ENCODE measurements at regions of chr18 and their contacts with region 1.

Region 1: DNA sequence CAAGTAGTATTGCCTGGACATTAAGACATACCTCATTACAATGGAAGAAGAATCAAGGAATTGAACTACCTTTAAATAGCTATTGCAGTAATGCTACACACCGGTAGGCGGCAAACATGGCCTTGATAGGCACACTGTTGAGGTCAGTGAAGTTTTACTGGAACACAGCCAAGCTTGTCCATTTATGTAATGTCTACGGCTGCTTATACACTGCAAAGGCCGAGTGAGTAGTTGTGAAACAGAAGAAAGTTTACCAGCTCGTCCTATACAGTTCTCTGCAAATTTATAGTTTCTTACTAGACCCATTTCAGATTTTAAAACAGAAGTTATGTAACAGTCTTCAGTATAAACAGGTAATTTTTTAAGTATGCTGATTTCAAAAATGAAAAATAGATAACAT is 38.8 kb downstream of the PPP4R1 start:
- DNase-seq: peak; percentile 42 to 92
- ATAC-seq: peak; percentile 95 to 99 (median 98)
- H3K4me3 ChIP-seq: no peak overlapping the region
- H3K27ac ChIP-seq: peak overlapping the region in 6 of 10 donors; percentile 6 to 60 (median 38)
- H3K4me1 ChIP-seq: peaks cover 0 to 13% (median 7%) of the 10 kb centered on the region in 9 donors
- H3K27me3 ChIP-seq: no peaks in the 10 kb centered on the region
- CTCF ChIP-seq: peak; percentile 81 to 94 (median 87)

Region 2: DNA sequence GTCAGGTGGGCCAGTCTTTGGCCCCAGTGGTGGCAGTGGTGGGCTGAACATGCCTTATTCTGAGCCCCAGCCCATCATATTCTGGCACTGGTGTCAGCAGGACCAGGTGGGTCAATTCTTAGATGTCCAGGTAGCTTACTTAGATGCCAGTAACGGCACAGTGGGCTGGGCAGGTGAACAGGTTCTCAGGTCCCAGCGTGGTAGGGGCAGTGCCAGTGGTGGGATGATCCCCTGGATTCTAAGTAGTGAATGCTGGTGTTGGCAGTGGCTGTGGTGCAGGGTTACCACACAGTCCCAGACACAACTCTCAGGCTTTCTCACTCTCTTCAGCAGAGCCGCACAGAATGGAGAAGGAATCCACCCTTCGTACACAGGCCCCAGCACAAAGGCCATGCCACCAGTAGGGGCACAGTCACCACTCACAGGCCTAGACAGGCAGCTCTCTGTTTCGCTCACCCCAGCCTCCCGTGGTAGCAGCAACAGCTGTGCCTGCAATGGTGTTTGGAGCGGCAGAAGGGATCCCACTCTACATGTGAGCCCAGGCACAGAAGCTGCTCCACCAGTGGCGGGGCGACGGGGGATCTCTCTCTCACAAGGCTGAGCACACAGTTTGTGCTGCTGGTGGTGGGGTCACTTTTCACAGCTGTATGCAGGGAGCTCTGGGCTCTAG is 341.7 kb before region 1 on chr18:
- intact Hi-C with region 1: no loop called
- DNase-seq: no peak
- ATAC-seq: peak in 1 of 8 donors; percentile 53
- H3K4me3 ChIP-seq: no peak overlapping the region
- H3K27ac ChIP-seq: no peak overlapping the region
- H3K4me1 ChIP-seq: peaks cover 0 to 9% (median 0%) of the 10 kb centered on the region in 9 donors
- H3K27me3 ChIP-seq: no peaks in the 10 kb centered on the region
- CTCF ChIP-seq: no peak

Region 3: GRCh38 chr18:9495911-9496705 is 79.5 kb before region 1 on chr18:
- intact Hi-C with region 1: no loop called
- DNase-seq: no peak
- ATAC-seq: no peak
- H3K4me3 ChIP-seq: no peak overlapping the region
- H3K27ac ChIP-seq: no peak overlapping the region
- H3K4me1 ChIP-seq: peaks cover 0 to 19% (median 3%) of the 10 kb centered on the region in 9 donors
- H3K27me3 ChIP-seq: no peaks in the 10 kb centered on the region
- CTCF ChIP-seq: no peak

Region 4: DNA sequence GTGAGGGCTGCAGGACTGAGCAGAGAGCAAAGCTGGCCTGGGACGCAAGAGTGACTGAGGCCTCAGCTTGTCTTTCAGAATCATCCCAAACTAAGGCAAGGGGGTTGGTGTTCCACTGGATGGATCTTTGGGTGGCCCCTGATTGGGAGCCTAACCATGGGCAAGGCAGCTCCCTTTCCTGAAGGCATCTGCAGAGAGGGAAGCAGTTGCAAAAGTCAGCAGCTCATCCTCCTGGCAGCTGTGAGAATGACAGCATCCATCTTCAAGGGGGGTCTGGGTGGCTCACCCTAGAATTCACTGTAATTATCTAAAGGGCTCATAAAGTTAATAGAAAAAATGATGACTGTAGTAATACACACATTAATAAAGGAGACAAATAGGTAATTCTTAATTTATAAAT is 86.0 kb after region 1 on chr18:
- intact Hi-C with region 1: loop called in 1 of 10 experiments (anchors 10 kb)
- DNase-seq: no peak
- ATAC-seq: no peak
- H3K4me3 ChIP-seq: no peak overlapping the region
- H3K27ac ChIP-seq: no peak overlapping the region
- H3K4me1 ChIP-seq: no peaks in the 10 kb centered on the region
- H3K27me3 ChIP-seq: no peaks in the 10 kb centered on the region
- CTCF ChIP-seq: peak in 2 of 9 donors; percentile 27 to 28

Region 5: GRCh38 chr18:9673296-9674251 is 98.0 kb after region 1 on chr18:
- intact Hi-C with region 1: loop called in 6 of 10 experiments (anchors 1 to 10 kb)
- DNase-seq: peak in 1 of 2 donors; percentile 36
- ATAC-seq: peak; percentile 87 to 95 (median 91)
- H3K4me3 ChIP-seq: no peak overlapping the region
- H3K27ac ChIP-seq: peak overlapping the region in 3 of 10 donors; percentile 6 to 49 (median 31)
- H3K4me1 ChIP-seq: peaks cover 0 to 17% (median 0%) of the 10 kb centered on the region in 9 donors
- H3K27me3 ChIP-seq: no peaks in the 10 kb centered on the region
- CTCF ChIP-seq: peak in 6 of 9 donors; percentile 19 to 55 (median 48)

Region 6: GRCh38 chr18:9771261-9771976 is 195.9 kb after region 1 on chr18:
- intact Hi-C with region 1: loop called in 8 of 10 experiments (anchors 1 to 10 kb)
- DNase-seq: peak; percentile 88 to 89
- ATAC-seq: peak; percentile 90 to 98 (median 95)
- H3K4me3 ChIP-seq: peak overlapping the region in 1 of 10 donors; percentile 27
- H3K27ac ChIP-seq: peak overlapping the region in 4 of 10 donors; percentile 18 to 86 (median 28)
- H3K4me1 ChIP-seq: peaks cover 0 to 86% (median 8%) of the 10 kb centered on the region in 9 donors
- H3K27me3 ChIP-seq: no peaks in the 10 kb centered on the region
- CTCF ChIP-seq: peak; percentile 92 to 99 (median 99)

Region 7: DNA sequence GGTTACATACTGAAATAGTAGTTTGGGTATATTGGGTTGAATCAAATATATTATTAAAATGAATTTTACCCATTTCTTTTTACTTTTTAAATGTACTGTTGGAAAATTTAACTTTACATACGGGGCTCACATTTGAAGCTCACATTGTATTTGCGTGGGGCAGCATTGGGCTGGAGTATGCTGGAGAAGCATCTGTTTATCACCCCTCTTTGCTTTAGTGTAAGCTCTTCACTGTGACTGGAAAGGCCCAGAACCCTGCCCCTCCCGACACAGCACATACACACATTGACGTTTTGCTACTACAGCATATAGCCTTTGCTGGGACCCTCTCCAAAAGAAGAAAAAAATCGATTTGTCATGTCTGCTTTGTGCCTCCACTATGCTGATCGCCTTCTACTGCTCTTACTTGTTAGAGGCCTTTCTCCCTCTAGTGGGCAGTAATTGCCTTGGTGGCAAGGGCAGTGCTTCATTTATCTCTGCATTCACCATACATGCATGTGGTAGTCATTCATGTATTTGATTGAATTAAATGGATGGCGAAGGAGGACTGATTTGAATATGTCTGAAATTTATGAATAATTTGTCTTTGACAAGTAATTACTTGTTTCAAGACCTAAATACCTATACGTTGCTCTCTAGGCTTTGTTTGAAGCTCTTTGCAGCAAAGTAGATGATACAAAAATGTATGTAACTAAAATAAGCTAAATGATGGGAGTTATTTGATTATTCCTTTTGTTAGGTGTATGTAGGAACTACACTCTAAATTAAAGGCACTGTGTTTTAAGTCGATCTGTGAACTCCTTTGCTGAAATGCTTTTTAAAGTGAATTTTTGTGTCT is 375.7 kb after region 1 on chr18:
- intact Hi-C with region 1: loop called in 2 of 10 experiments (anchors 10 kb)
- DNase-seq: no peak
- ATAC-seq: peak in 7 of 8 donors; percentile 48 to 80 (median 69)
- H3K4me3 ChIP-seq: no peak overlapping the region
- H3K27ac ChIP-seq: no peak overlapping the region
- H3K4me1 ChIP-seq: peaks cover 0 to 20% (median 0%) of the 10 kb centered on the region in 9 donors
- H3K27me3 ChIP-seq: no peaks in the 10 kb centered on the region
- CTCF ChIP-seq: peak; percentile 30 to 69 (median 60)